Transverse colon (tissue), 4 donors: ENCODE measurements at regions of chr13 and their contacts with region 1.

Region 1: GRCh38 chr13:38283346-38283745 is 66.3 kb upstream of the UFM1 start:
- DNase-seq: no peak
- H3K4me3 ChIP-seq: no peak overlapping the region
- H3K27ac ChIP-seq: no peak overlapping the region
- H3K4me1 ChIP-seq: no peaks in the 10 kb centered on the region
- H3K27me3 ChIP-seq: no peaks in the 10 kb centered on the region
- CTCF ChIP-seq: no peak
- EP300 ChIP-seq: no peak
- POLR2A ChIP-seq: no peak

Region 2: DNA sequence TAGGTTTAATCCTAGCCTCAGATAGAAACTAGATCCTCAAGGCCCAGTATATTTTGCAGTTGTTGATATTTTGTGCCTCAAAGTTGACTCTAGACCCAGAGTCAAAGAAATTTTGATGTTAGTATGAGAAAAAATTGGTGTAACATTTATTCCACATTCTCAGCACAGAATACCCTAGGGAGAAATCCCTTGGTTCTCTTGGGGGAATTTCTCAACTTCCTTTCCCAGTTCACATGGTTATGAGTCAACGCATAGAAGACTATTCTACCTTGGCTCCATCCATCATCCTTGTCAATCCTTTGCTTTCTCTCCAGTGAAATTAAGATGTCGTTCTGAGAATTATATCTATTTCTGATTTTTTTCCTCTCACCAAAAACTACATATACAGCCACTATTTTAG is 830.1 kb before region 1 on chr13:
- in situ Hi-C with region 1: no loop called
- intact Hi-C with region 1: no loop called
- DNase-seq: no peak
- H3K4me3 ChIP-seq: no peak overlapping the region
- H3K27ac ChIP-seq: no peak overlapping the region
- H3K4me1 ChIP-seq: no peaks in the 10 kb centered on the region
- H3K27me3 ChIP-seq: no peaks in the 10 kb centered on the region
- CTCF ChIP-seq: no peak
- EP300 ChIP-seq: no peak
- POLR2A ChIP-seq: no peak

Region 3: GRCh38 chr13:38730332-38730731 is 447.0 kb after region 1 on chr13:
- in situ Hi-C with region 1: no loop called
- intact Hi-C with region 1: loop called (anchors 5 kb)
- DNase-seq: no peak
- H3K4me3 ChIP-seq: no peak overlapping the region
- H3K27ac ChIP-seq: no peak overlapping the region
- H3K4me1 ChIP-seq: no peaks in the 10 kb centered on the region
- H3K27me3 ChIP-seq: no peaks in the 10 kb centered on the region
- CTCF ChIP-seq: no peak
- EP300 ChIP-seq: no peak
- POLR2A ChIP-seq: no peak